PC-3 (cell line): ENCODE measurements at regions of chr20 and their contacts with region 1.

Region 1: DNA sequence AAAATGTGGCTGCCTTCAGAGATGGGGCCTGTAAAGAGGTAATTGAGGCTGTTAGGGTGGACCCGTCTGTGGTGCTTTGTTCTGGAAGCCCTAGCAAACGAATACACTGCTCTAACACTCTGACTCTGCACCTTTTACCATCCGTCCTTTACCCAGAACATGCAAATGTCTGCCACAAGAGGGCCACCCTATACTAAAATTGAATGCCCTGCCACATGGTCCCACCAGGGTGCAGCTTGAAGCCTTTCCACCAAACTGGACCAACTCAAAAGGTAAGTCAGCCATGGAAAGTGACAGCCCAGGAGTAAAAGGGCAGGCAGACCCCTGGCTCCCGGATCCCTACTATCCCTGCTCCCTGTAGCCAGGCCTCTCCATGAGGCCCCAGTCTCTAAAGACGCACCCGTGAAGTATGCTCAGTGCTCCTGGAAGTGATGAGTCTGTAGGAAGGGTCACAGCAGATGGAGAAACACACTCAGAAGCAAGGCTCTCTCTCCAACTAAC is 5.8 kb upstream of the BFSP1 start:
- DNase-seq: peak; percentile 91
- ATAC-seq: peak; percentile 94
- H3K4me3 ChIP-seq: no peak overlapping the region
- H3K27ac ChIP-seq: no peak overlapping the region
- H3K4me1 ChIP-seq: peaks cover 23% of the 10 kb centered on the region
- H3K27me3 ChIP-seq: no peaks in the 10 kb centered on the region
- CTCF ChIP-seq: peak; percentile 98

Region 2: DNA sequence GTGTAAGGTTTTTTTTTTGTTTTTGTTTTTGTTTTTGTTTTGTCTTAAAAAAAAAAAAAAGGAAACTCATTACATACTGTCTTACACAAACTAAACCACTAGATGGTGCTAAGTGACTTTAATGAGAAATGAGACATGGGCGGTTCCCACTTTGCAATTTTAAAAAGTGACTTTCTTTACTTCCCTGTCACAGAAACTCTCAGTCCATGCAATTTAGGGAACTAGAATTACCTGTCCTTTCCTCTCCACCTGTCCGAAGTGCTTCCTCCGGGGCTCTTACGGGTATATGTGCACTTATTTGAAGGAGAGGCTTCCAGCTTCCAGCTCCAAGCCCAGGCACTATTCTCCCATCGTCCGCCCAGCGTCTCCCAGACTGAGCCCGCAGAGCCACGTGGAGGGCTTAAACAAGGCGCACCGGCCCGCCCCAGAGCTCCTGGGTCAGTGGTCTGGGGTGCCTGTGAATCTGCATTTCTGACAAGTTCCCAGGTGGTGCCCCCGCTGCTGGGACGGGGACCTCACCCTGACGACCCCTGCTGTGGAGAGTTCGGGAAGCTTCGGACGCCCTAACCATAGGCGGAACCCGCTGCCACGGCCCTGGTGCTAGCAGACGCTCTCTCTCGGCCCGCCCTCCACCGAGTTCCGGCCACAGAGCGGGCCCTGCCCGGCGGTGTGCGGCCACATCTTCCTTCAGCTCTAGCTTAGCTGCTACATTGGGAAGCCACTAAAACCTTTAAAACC is 31.9 kb before region 1 on chr20:
- CTCF ChIA-PET with region 1: no interaction called
- POLR2A ChIA-PET with region 1: no interaction called
- intact Hi-C with region 1: no loop called
- DNase-seq: peak; percentile 84
- ATAC-seq: peak; percentile 86
- H3K4me3 ChIP-seq: peak overlapping the region; percentile 80
- H3K27ac ChIP-seq: peak overlapping the region; percentile 25; the same call in 1 of the 2 replicates
- H3K4me1 ChIP-seq: peaks cover 9% of the 10 kb centered on the region; the same call in 1 of the 2 replicates
- H3K27me3 ChIP-seq: no peaks in the 10 kb centered on the region
- CTCF ChIP-seq: peak; percentile 91

Region 3: GRCh38 chr20:17558154-17558940 is 21.4 kb after region 1 on chr20:
- CTCF ChIA-PET with region 1: no interaction called
- POLR2A ChIA-PET with region 1: interaction called, 7 read pairs
- intact Hi-C with region 1: loop called (anchors 1 kb)
- DNase-seq: peak; percentile 95
- ATAC-seq: peak; percentile 76
- H3K4me3 ChIP-seq: peak overlapping the region; percentile 64
- H3K27ac ChIP-seq: peak overlapping the region; percentile 98
- H3K4me1 ChIP-seq: peaks cover 50% of the 10 kb centered on the region
- H3K27me3 ChIP-seq: no peaks in the 10 kb centered on the region
- CTCF ChIP-seq: no peak

Region 4: GRCh38 chr20:17569616-17570346 is 32.8 kb after region 1 on chr20 and contains the start of gene DSTN:
- CTCF ChIA-PET with region 1: interaction called, 8 read pairs
- POLR2A ChIA-PET with region 1: interaction called, 8 read pairs
- intact Hi-C with region 1: loop called (anchors 1 kb)
- DNase-seq: peak; percentile 98
- ATAC-seq: peak; percentile 71
- H3K4me3 ChIP-seq: peak within 1 kb of the TSS; percentile 97
- H3K27ac ChIP-seq: peak within 1 kb of the TSS; percentile 89
- H3K4me1 ChIP-seq: peaks cover 39% of the 10 kb centered on the region
- H3K27me3 ChIP-seq: no peaks in the 10 kb centered on the region
- CTCF ChIP-seq: no peak
- total RNA-seq, gene DSTN: 177 and 182 TPM in 2 replicates

Region 5: GRCh38 chr20:17604852-17605660 is 68.1 kb after region 1 on chr20:
- CTCF ChIA-PET with region 1: interaction called, 4 read pairs
- POLR2A ChIA-PET with region 1: no interaction called
- intact Hi-C with region 1: loop called (anchors 1 kb)
- DNase-seq: peak; percentile 75
- ATAC-seq: peak; percentile 71
- H3K4me3 ChIP-seq: no peak overlapping the region
- H3K27ac ChIP-seq: 0 out of 2 replicates have a peak overlapping the region, but pooled peaks have one; percentile 9
- H3K4me1 ChIP-seq: peaks cover 23% of the 10 kb centered on the region
- H3K27me3 ChIP-seq: no peaks in the 10 kb centered on the region
- CTCF ChIP-seq: no peak

Region 6: GRCh38 chr20:17898548-17898994 is 361.6 kb after region 1 on chr20:
- CTCF ChIA-PET with region 1: no interaction called
- POLR2A ChIA-PET with region 1: no interaction called
- intact Hi-C with region 1: loop called (anchors 1 kb)
- DNase-seq: peak; percentile 86
- ATAC-seq: peak; percentile 75
- H3K4me3 ChIP-seq: no peak overlapping the region
- H3K27ac ChIP-seq: no peak overlapping the region
- H3K4me1 ChIP-seq: no peaks in the 10 kb centered on the region
- H3K27me3 ChIP-seq: no peaks in the 10 kb centered on the region
- CTCF ChIP-seq: peak; percentile 98